ENCODE measurements at regions of chr3 and their contacts with region 1.

Region 1: DNA sequence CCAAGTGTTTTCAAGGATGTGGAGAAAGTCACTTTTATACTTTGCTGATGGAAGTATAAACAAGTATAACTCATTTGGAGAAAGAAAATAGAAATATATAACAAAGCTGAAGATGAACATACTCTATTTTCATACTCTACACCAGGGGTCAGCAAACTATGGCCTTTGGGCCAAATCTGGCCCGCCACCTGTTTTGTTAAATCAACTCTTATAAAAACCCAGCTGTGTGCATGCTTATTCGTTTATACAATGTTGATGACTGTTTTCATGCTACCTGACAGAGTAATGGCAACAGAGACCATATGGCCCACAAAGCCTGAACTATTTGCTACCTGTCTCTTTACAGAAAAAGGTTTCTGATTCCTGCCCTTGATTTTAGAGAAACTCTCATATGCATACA is 124.0 kb downstream of the NR1D2 start:
- DNase-seq: no peak
- ATAC-seq: no peak
- H3K4me3 ChIP-seq: no peak overlapping the region
- H3K27ac ChIP-seq: no peak overlapping the region
- H3K4me1 ChIP-seq: no peaks in the 10 kb centered on the region
- H3K27me3 ChIP-seq: no peaks in the 10 kb centered on the region

Region 2: DNA sequence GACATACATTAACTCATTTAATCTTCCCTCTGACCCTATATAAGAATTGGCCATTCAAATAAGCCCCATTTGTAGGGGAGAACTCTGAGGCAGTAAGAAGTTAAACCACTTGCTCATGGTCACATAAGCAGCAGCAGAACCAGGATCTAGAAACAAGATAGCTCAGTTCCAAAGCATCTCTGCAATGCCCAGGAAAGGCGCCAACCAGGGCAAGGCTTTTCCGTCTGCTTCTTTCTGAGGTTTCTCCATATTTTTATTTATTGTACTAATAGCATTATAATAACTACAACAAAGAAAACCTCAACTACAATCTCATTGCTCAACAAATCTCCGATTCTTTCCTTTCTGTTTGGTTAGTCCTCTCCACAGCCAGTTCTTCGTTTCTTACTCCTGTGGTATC is 870.2 kb before region 1 on chr3:
- intact Hi-C with region 1: no loop called
- DNase-seq: peak in 1 of 2 donors; percentile 49
- ATAC-seq: no peak
- H3K4me3 ChIP-seq: no peak overlapping the region
- H3K27ac ChIP-seq: no peak overlapping the region
- H3K4me1 ChIP-seq: no peaks in the 10 kb centered on the region
- H3K27me3 ChIP-seq: no peaks in the 10 kb centered on the region

Region 3: GRCh38 chr3:23761440-23761896 is 307.6 kb before region 1 on chr3:
- intact Hi-C with region 1: no loop called
- DNase-seq: no peak
- ATAC-seq: no peak
- H3K4me3 ChIP-seq: no peak overlapping the region
- H3K27ac ChIP-seq: no peak overlapping the region
- H3K4me1 ChIP-seq: no peaks in the 10 kb centered on the region
- H3K27me3 ChIP-seq: no peaks in the 10 kb centered on the region

Region 4: DNA sequence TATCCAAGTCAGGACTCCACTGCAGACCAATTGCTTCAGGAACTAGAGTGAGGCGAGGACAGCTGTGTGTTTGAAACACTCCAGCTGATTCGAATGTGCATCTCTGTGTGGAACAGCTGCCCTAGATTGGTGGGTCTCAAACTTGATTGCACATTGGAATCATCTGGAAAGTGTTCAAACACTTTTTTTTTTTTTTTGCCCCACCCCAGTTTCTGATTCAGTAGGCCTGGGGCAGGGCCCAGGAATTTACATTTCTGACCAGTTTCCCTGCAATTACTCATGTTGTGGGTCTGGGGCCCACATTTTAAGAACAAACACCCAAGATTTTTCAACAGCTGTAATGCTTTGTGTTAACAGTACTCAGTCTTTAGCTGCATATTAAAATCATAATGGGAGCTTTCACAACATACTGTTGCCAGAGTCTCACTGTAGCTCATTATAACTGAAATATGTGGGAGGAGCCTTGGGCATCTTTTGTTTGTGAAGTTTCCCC is 32.7 kb after region 1 on chr3:
- intact Hi-C with region 1: loop called in 1 of 2 experiments (anchors 5 kb)
- DNase-seq: no peak
- ATAC-seq: no peak
- H3K4me3 ChIP-seq: no peak overlapping the region
- H3K27ac ChIP-seq: no peak overlapping the region
- H3K4me1 ChIP-seq: peaks cover 2 to 3% of the 10 kb centered on the region in 2 donors
- H3K27me3 ChIP-seq: no peaks in the 10 kb centered on the region

Region 5: DNA sequence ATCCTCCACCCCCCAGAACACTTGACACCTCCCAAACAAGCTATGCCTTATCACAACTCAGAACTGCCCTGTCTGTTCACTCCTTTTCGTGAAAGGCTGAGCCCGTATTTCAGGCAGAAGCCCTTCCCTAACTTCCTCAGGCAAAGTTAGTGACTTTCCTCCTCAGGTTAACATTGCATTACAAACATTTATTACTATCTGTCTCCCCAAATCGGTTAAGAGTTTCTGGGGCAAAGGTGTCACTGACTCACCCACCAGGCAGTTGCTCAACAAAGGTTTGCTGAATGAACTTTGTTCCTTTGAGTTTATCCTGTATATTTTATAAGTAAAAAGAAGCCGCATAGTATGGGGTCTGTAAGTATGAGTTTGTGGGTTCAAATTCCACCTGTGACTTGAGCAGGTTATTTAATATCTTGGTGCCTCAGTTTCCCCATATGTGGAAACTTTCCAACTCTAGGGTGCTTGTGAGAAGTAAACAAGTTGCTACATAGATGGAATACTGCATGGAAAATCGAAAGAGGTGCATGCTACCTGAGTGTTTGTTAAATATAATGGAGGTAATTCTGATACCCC is 247.9 kb after region 1 on chr3:
- intact Hi-C with region 1: no loop called
- DNase-seq: no peak
- ATAC-seq: no peak
- H3K4me3 ChIP-seq: no peak overlapping the region
- H3K27ac ChIP-seq: peak overlapping the region in 1 of 2 donors; percentile 21
- H3K4me1 ChIP-seq: peaks cover 2 to 4% of the 10 kb centered on the region in 2 donors
- H3K27me3 ChIP-seq: no peaks in the 10 kb centered on the region